Activated B cell treated with CpG ODN at 0.5 μM for 24 hours (primary cell): ENCODE measurements at regions of chr14 and their contacts with region 1.

Region 1: GRCh38 chr14:63800651-63801375 is 52.0 kb upstream of the SYNE2 start:
- DNase-seq: no peak
- ATAC-seq: no peak
- H3K4me3 Mint-ChIP-seq: no peak overlapping the region
- H3K27ac Mint-ChIP-seq: no peak overlapping the region
- H3K4me1 Mint-ChIP-seq: peaks cover 3% of the 10 kb centered on the region
- H3K27me3 Mint-ChIP-seq: no peaks in the 10 kb centered on the region
- CTCF ChIP-seq: no peak

Region 2: DNA sequence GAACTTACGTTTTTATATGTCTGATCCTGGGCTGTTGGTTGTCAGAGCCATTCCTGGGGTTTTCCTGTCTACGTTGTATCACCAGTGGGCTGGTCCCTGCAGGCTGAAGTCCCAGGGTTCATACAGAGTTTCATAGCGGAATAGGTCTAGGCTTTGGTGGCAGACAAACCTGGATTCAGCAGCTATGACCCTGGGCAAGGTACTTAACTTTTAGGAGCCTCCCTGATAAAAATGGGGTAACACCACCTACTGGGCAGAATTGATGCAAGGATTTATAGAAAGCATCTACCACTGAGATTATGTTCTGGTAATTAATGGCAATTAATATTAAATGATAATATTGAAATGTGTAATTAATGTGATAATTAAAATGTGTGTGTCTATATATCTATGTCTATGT is 193.2 kb after region 1 on chr14:
- CTCF ChIA-PET with region 1: interaction called, 5 read pairs
- POLR2A ChIA-PET with region 1: no interaction called
- intact Hi-C with region 1: loop called (anchors 1 kb)
- DNase-seq: no peak
- ATAC-seq: no peak
- H3K4me3 Mint-ChIP-seq: no peak overlapping the region
- H3K27ac Mint-ChIP-seq: no peak overlapping the region
- H3K4me1 Mint-ChIP-seq: peaks cover 5% of the 10 kb centered on the region
- H3K27me3 Mint-ChIP-seq: no peaks in the 10 kb centered on the region
- CTCF ChIP-seq: no peak

Region 3: GRCh38 chr14:64159588-64159987 is 358.8 kb after region 1 on chr14:
- CTCF ChIA-PET with region 1: interaction called, 3 read pairs
- POLR2A ChIA-PET with region 1: no interaction called
- intact Hi-C with region 1: loop called (anchors 1 kb)
- DNase-seq: no peak
- ATAC-seq: peak; percentile 47
- H3K4me3 Mint-ChIP-seq: no peak overlapping the region
- H3K27ac Mint-ChIP-seq: no peak overlapping the region
- H3K4me1 Mint-ChIP-seq: peaks cover 6% of the 10 kb centered on the region
- H3K27me3 Mint-ChIP-seq: no peaks in the 10 kb centered on the region
- CTCF ChIP-seq: no peak